Gastrocnemius medialis (tissue), 4 donors: ENCODE measurements at regions of chr12 and their contacts with region 1.

Region 1: DNA sequence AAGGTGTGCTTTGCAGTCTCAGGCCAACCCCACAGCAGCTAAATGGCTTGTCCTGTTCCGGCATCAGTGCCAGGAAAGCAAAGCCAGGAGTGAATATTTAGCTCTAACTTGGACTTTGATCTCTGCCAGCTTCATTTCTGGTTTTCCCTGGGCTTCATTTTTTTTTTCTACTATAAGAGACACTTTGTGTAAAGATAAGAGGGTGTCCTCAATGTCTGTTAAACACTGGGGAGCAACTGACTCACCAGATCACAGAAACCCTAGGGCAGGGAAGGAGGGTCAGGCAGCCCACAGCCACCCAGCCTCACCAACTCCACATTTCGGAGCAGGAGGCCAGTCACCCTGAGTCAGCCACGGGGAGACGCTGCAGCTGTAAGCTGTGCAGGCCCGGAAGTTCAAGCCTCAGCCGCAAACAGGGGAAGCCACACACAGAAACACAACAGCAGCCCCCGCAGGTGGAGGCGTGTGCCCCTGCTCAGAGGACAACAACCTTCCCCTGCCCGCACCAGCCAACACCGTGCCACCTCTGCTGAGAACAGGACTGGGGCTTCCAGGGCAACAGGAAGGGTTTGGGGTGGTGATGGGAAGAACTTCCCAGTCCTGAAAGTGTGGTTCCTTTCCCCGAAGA is 6.3 kb downstream of the TNFRSF1A start:
- DNase-seq: peak; percentile 69 to 83
- ATAC-seq: peak; percentile 48 to 50
- H3K4me3 ChIP-seq: peak overlapping the region; percentile 58 to 99 (median 78)
- H3K27ac ChIP-seq: peak overlapping the region; percentile 92 to 99 (median 96)
- H3K4me1 ChIP-seq: peaks cover 56 to 59% of the 10 kb centered on the region in 2 donors
- H3K27me3 ChIP-seq: no peaks in the 10 kb centered on the region
- CTCF ChIP-seq: peak in 4 of 5 experiments; percentile 40 to 66 (median 59)
- POLR2A ChIP-seq: no peak

Region 2: DNA sequence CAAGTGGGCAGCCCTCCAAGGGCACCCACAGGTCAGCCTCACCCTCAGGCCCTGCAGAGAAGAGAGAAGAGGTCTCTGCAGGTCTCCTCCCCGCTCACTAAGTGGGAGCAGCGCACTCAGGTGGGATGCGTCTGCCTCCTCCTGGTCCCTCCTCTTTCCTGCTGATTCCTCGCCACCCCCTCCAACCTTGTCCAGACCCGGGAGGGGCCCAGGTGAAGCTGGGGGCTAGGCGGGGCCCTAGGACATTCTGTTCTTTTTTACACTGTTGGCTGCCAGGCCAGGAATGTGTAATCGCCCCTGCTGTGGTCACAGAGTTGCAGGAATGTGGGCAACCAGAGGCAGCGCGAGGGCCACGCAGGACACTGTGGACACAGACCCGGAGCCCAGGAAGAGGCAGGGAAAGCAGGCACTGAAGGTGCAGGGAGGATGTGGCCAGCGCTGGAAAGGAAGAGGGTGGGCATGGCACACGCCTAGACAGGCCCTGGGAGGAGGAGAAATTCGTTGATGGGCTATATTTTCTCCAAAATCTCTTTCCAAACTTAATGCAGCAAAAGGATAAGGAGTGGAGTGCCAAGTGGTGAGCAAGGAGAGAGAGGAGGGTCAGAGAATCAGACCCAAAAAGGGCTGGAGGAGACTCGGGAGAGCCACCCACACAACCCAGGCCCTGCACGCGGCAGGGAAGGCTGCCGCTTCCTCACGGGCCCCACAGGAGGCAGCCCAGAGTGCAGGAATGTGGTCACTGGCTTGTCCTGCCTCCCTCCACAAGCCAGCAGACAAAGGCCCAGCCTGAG is 40.7 kb after region 1 on chr12:
- in situ Hi-C with region 1: loop called in 3 of 4 experiments (anchors 5 to 10 kb)
- intact Hi-C with region 1: no loop called
- DNase-seq: peak in 1 of 2 donors; percentile 66
- ATAC-seq: peak; percentile 43 to 70
- H3K4me3 ChIP-seq: no peak overlapping the region
- H3K27ac ChIP-seq: peak overlapping the region; percentile 14 to 63 (median 36)
- H3K4me1 ChIP-seq: peaks cover 27 to 28% of the 10 kb centered on the region in 2 donors
- H3K27me3 ChIP-seq: no peaks in the 10 kb centered on the region
- CTCF ChIP-seq: peak in 1 of 5 experiments; percentile 28
- POLR2A ChIP-seq: no peak

Region 3: GRCh38 chr12:6493497-6494257 is 158.1 kb after region 1 on chr12 and contains the start of gene NCAPD2:
- in situ Hi-C with region 1: no loop called
- intact Hi-C with region 1: loop called (anchors 5 kb)
- DNase-seq: peak; percentile 94 to 95
- ATAC-seq: peak; percentile 90 to 92
- H3K4me3 ChIP-seq: peak within 1 kb of the TSS; percentile 81 to 99 (median 88)
- H3K27ac ChIP-seq: peak within 1 kb of the TSS; percentile 93 to 100 (median 98)
- H3K4me1 ChIP-seq: peaks cover 21 to 27% of the 10 kb centered on the region in 2 donors
- H3K27me3 ChIP-seq: no peaks in the 10 kb centered on the region
- CTCF ChIP-seq: peak; percentile 54 to 79 (median 60)
- POLR2A ChIP-seq: peak; percentile 65 to 89
- total RNA-seq, gene NCAPD2: 12.3 to 250 (median 13.3) TPM

Region 4: GRCh38 chr12:6540181-6540877 is 204.8 kb after region 1 on chr12:
- in situ Hi-C with region 1: loop called in 1 of 4 experiments (anchors 5 kb)
- intact Hi-C with region 1: loop called (anchors 5 kb)
- DNase-seq: peak; percentile 78 to 89
- ATAC-seq: peak; percentile 54 to 76
- H3K4me3 ChIP-seq: peak overlapping the region in 2 of 4 donors; percentile 10 to 17
- H3K27ac ChIP-seq: peak overlapping the region; percentile 91 to 97 (median 96)
- H3K4me1 ChIP-seq: peaks cover 34 to 47% of the 10 kb centered on the region in 2 donors
- H3K27me3 ChIP-seq: no peaks in the 10 kb centered on the region
- CTCF ChIP-seq: no peak
- POLR2A ChIP-seq: no peak

Region 5: DNA sequence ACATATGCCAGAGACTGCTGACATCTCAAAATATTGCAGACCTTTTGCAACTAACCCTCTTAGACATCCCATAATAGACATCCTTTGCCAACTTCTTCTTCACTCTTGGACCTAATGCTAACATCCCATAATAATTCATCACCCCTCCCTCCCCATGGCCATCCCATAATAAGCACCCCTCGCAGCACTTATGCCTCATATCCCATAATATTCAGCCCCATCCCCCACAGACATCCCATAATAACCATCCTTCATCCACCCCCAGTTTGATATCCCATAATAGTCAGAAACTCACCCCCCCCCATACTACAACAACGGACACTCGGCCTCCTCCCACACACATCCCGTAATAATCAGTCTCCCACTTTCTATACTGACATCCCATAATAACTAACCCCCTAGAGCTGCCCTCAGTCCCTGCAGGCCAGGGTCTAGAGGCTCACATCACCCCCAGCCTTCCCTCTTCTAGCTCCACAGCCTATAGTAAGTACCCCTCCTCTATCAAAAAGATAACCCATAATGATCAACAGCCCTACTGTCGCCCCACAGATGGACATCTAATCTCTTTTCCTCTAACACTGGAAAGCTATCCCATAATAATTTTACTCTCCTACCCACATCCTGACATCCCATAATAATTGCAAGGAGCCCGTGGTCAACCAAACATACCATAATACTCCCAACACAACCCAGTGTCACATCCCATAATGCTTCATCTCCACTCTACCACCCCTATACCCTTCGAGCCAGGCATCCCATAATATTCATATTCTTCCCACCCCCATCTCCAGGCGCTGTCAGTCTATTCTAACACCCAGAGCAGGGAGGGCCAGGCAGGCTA is 272.4 kb after region 1 on chr12:
- in situ Hi-C with region 1: no loop called
- intact Hi-C with region 1: loop called (anchors 5 kb)
- DNase-seq: peak in 1 of 2 donors; percentile 52
- ATAC-seq: peak; percentile 18 to 34
- H3K4me3 ChIP-seq: peak overlapping the region in 1 of 4 donors; percentile 98
- H3K27ac ChIP-seq: peak overlapping the region; percentile 95 to 99 (median 97)
- H3K4me1 ChIP-seq: peaks cover 44 to 52% of the 10 kb centered on the region in 2 donors
- H3K27me3 ChIP-seq: no peaks in the 10 kb centered on the region
- CTCF ChIP-seq: no peak
- POLR2A ChIP-seq: no peak

Region 6: DNA sequence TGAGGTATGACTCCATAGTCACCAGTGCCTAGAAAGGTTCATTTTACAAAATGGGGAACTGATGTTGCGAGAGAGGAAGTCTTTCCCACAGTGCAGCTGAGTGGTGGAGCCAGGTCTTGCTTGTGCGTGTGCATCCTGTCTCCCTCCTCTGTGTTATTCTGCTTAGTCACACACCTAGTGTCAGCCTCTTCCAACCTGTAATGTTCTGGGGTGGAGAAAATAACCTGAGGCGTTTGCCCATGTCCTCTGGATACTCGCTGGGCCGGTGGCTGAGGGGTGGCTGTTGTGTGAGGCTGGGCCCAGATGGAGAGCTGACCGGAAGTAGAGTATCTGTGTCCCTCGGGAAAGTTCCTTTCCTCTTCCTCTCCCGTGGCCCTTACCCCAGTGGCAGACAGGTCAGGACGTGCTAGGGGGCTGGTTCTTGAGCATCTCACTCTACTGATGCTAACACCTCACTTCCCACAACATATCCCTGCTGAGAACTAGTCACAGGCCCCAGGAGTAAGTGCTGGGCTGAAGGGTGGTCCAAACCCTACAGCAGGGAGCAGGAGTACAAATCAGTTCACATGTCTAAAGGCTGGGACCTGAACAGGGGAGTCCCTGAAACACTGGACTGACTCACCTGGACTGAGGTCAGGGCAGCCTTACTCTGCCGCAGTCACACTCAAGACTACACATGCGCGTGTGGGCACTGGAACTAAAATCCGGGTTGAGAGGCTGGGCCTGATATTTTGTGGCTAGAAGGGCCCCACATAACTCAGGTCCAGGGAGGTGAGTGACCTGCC is 410.4 kb after region 1 on chr12:
- in situ Hi-C with region 1: no loop called
- intact Hi-C with region 1: no loop called
- DNase-seq: no peak
- ATAC-seq: no peak
- H3K4me3 ChIP-seq: no peak overlapping the region
- H3K27ac ChIP-seq: peak overlapping the region; percentile 14 to 55 (median 50)
- H3K4me1 ChIP-seq: peaks cover 0 to 4% of the 10 kb centered on the region in 2 donors
- H3K27me3 ChIP-seq: no peaks in the 10 kb centered on the region
- CTCF ChIP-seq: no peak
- POLR2A ChIP-seq: no peak